CD4-positive, alpha-beta memory T cell (primary cell): ENCODE measurements at regions of chr7 and their contacts with region 1.

Region 1: DNA sequence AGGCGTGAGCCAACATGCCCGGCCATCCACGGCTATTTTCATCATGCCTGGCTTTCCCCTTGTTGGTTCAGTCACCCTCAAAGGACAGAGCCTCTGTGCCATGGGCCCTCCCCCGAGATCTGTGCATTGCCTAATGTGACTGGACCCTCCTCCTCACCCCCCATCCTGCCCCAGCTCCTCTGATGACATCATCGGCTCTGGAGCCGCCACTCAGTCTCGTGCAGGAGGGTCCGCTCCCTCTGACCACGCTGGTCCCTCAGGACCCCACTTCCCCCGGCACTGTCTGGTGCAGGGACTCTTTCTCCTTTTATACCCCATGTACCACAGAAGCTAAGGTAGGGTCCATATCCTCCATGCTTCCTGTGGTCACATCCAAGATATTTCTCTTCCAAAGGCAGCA is 33.2 kb upstream of the BAIAP2L1 start:
- DNase-seq: no peak
- H3K4me3 ChIP-seq: no peak overlapping the region
- H3K4me3 Mint-ChIP-seq: no peak overlapping the region
- H3K27ac ChIP-seq: no peak overlapping the region
- H3K27ac Mint-ChIP-seq: peak overlapping the region in 2 of 7 donors; percentile 9 to 22
- H3K4me1 ChIP-seq: no peaks in the 10 kb centered on the region
- H3K4me1 Mint-ChIP-seq: peaks cover 0 to 14% (median 9%) of the 10 kb centered on the region in 4 donors
- H3K27me3 ChIP-seq: no peaks in the 10 kb centered on the region
- H3K27me3 Mint-ChIP-seq: peaks cover 0 to 4% of the 10 kb centered on the region in 2 donors

Region 2: DNA sequence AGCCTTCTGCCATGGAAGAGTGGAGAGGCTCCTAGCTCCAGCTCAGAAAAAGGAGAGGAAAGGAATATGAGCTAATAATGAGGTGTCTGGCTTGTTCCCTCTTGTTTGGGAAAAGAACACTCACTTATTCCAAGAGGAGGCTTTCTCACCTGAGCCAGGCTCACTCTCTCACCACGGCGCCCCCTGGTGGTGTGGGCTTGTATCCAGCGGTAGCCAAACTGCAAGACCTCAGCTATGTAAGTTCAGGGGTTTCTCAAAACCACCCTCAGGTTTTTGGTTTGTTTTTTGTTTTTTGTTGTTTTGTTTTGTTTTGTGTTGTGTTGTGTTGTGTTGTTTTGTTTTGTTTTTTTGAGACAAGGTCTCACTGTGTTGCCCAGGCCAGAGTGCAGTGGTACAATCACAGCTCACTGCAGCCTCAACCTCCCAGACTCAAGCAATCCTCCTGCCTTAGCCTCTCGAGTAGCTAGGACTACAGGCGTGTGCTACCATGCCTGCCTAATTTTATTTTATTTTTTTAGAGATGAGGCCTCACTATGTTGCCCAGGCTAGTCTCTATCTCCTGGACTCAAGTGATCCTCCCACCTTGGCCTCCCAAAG is 311.7 kb after region 1 on chr7:
- CTCF ChIA-PET with region 1: interaction called, 53 read pairs
- POLR2A ChIA-PET with region 1: no interaction called
- intact Hi-C with region 1: no loop called
- DNase-seq: peak; percentile 38 to 49 (median 45)
- H3K4me3 ChIP-seq: no peak overlapping the region
- H3K4me3 Mint-ChIP-seq: no peak overlapping the region
- H3K27ac ChIP-seq: no peak overlapping the region
- H3K27ac Mint-ChIP-seq: no peak overlapping the region
- H3K4me1 ChIP-seq: no peaks in the 10 kb centered on the region
- H3K4me1 Mint-ChIP-seq: no peaks in the 10 kb centered on the region
- H3K27me3 ChIP-seq: no peaks in the 10 kb centered on the region
- H3K27me3 Mint-ChIP-seq: peaks cover 3 to 11% of the 10 kb centered on the region in 2 donors

Region 3: GRCh38 chr7:98841179-98841997 is 407.3 kb after region 1 on chr7:
- CTCF ChIA-PET with region 1: interaction called, 111 read pairs
- POLR2A ChIA-PET with region 1: no interaction called
- intact Hi-C with region 1: loop called (anchors 1 kb)
- DNase-seq: peak; percentile 38 to 57 (median 46)
- H3K4me3 ChIP-seq: no peak overlapping the region
- H3K4me3 Mint-ChIP-seq: no peak overlapping the region
- H3K27ac ChIP-seq: no peak overlapping the region
- H3K27ac Mint-ChIP-seq: no peak overlapping the region
- H3K4me1 ChIP-seq: no peaks in the 10 kb centered on the region
- H3K4me1 Mint-ChIP-seq: peaks cover 0 to 5% (median 0%) of the 10 kb centered on the region in 4 donors
- H3K27me3 ChIP-seq: no peaks in the 10 kb centered on the region
- H3K27me3 Mint-ChIP-seq: peaks cover 2 to 8% of the 10 kb centered on the region in 2 donors